Body of pancreas (tissue), 4 donors: ENCODE measurements at regions of chr5 and their contacts with region 1.

Region 1: GRCh38 chr5:38809388-38810359 is 36.1 kb upstream of the OSMR start:
- DNase-seq: peak; percentile 80 to 85 (median 82)
- ATAC-seq: peak; percentile 91
- H3K4me3 ChIP-seq: no peak overlapping the region
- H3K27ac ChIP-seq: no peak overlapping the region
- H3K4me1 ChIP-seq: peaks cover 8% of the 10 kb centered on the region
- H3K27me3 ChIP-seq: no peaks in the 10 kb centered on the region
- CTCF ChIP-seq: peak; percentile 56 to 92 (median 88)
- POLR2A ChIP-seq: peak in 1 of 3 donors; percentile 9

Region 2: GRCh38 chr5:38420691-38421390 is 388.8 kb before region 1 on chr5:
- intact Hi-C with region 1: loop called (anchors 5 kb)
- DNase-seq: peak; percentile 70 to 82 (median 77)
- ATAC-seq: peak; percentile 87
- H3K4me3 ChIP-seq: no peak overlapping the region
- H3K27ac ChIP-seq: no peak overlapping the region
- H3K4me1 ChIP-seq: no peaks in the 10 kb centered on the region
- H3K27me3 ChIP-seq: no peaks in the 10 kb centered on the region
- CTCF ChIP-seq: peak; percentile 53 to 76 (median 74)
- POLR2A ChIP-seq: no peak

Region 3: GRCh38 chr5:38441453-38442246 is 368.0 kb before region 1 on chr5:
- intact Hi-C with region 1: loop called (anchors 10 kb)
- DNase-seq: peak; percentile 92 to 95 (median 92)
- ATAC-seq: peak; percentile 97
- H3K4me3 ChIP-seq: no peak overlapping the region
- H3K27ac ChIP-seq: no peak overlapping the region
- H3K4me1 ChIP-seq: peaks cover 14% of the 10 kb centered on the region
- H3K27me3 ChIP-seq: no peaks in the 10 kb centered on the region
- CTCF ChIP-seq: peak; percentile 93 to 97 (median 97)
- POLR2A ChIP-seq: no peak

Region 4: GRCh38 chr5:38680094-38680825 is 129.4 kb before region 1 on chr5:
- intact Hi-C with region 1: loop called (anchors 10 kb)
- DNase-seq: no peak
- ATAC-seq: no peak
- H3K4me3 ChIP-seq: no peak overlapping the region
- H3K27ac ChIP-seq: no peak overlapping the region
- H3K4me1 ChIP-seq: no peaks in the 10 kb centered on the region
- H3K27me3 ChIP-seq: no peaks in the 10 kb centered on the region
- CTCF ChIP-seq: no peak
- POLR2A ChIP-seq: no peak

Region 5: DNA sequence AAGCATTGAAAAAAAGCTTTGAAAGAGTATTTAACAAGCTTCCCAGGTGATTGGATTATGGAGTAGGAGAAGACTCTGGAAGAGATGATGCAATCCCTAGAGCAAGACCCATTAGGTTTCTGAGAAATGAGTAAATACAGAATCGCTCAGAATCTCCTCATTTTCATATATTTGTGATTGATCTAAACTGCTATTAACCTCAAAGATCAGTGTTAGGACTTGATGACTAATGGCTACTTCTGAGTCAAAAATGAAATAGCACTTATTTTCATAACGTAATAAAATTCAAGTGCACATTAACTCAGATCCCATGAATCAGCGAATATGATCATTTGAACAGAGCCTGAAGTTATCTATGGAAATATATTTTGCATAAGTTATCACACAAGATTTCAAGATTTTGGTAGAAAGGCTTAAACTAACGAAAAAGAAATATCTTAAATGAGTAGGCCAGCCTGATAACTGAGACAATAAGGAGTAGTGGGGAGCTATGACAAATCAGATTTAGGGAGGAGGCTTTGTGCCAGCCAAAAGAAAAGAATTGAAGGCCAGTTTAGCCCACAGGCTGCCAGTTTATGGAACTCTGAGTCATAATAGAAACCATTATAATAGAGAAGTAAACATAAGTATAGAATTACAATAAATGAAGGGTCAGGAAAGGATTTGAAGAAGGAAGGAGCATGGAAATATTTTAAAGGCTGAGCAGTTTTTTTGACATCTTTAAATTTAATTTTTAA is 70.5 kb before region 1 on chr5:
- intact Hi-C with region 1: no loop called
- DNase-seq: no peak
- ATAC-seq: no peak
- H3K4me3 ChIP-seq: no peak overlapping the region
- H3K27ac ChIP-seq: no peak overlapping the region
- H3K4me1 ChIP-seq: no peaks in the 10 kb centered on the region
- H3K27me3 ChIP-seq: no peaks in the 10 kb centered on the region
- CTCF ChIP-seq: no peak
- POLR2A ChIP-seq: no peak